ENCODE measurements at regions of chr19 and their contacts with region 1.

Region 1: DNA sequence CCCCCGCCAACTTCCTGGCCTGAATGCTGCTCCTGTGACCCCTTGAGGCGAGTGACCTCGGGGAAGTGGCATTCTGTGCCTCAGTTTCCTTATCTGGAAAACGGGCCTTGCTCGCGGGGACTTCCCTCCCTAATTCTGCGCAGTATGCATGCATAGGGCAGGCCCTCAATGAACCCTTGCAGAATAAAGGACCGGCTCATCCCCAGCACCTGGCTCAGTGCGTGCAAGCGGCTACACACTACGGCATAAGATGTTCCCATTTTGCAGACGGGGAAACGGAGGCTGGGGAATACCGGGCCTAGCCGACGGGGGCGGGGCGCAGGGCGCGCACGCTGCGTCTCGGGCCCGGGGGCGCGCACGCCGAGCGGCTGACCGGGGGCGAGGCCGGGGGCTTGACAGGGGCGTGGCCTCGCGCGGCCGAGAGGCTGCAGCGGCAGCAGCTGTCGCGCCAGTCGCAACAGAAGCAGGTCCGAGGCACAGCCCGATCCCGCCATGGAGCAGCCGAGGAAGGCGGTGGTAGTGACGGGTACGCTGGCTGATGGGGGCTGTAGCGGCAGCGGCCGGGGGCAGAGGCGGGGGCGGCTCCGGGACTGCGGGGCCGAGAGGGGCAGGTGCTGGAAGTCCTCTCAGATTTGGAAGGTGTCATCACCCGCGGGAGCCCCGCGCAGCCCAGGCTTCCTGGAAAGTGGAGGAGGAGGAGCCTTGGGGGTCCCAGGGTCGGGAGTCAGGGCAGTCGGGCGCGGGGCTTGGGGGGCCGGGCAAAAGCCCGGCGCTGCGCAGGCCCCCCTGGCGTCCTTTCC is at the start of gene PGPEP1:
- DNase-seq: peak; percentile 39 to 85 (median 65)
- H3K4me3 ChIP-seq: peak within 1 kb of the TSS; percentile 56 to 85 (median 84)
- H3K4me3 Mint-ChIP-seq: peak within 1 kb of the TSS; percentile 84 to 92
- H3K27ac ChIP-seq: peak within 1 kb of the TSS; percentile 81 to 89
- H3K27ac Mint-ChIP-seq: peak within 1 kb of the TSS; percentile 70 to 92 (median 88)
- H3K4me1 ChIP-seq: peaks cover 41 to 46% of the 10 kb centered on the region in 2 donors
- H3K4me1 Mint-ChIP-seq: peaks cover 49% of the 10 kb centered on the region
- H3K27me3 ChIP-seq: no peaks in the 10 kb centered on the region
- H3K27me3 Mint-ChIP-seq: peaks cover 0 to 8% (median 2%) of the 10 kb centered on the region in 3 donors
- CTCF ChIP-seq: no peak
- polyA plus RNA-seq, gene PGPEP1: 10.3 to 25.1 (median 10.3) TPM

Region 2: GRCh38 chr19:18379803-18380747 is 39.7 kb after region 1 on chr19:
- intact Hi-C with region 1: loop called (anchors 5 kb)
- DNase-seq: peak; percentile 73 to 84 (median 74)
- H3K4me3 ChIP-seq: peak overlapping the region in 1 of 3 experiments; percentile 4
- H3K4me3 Mint-ChIP-seq: peak overlapping the region in 1 of 2 donors; percentile 59
- H3K27ac ChIP-seq: peak overlapping the region; percentile 69 to 74
- H3K27ac Mint-ChIP-seq: peak overlapping the region; percentile 82 to 96 (median 90)
- H3K4me1 ChIP-seq: peaks cover 30 to 45% of the 10 kb centered on the region in 2 donors
- H3K4me1 Mint-ChIP-seq: peaks cover 46% of the 10 kb centered on the region
- H3K27me3 ChIP-seq: no peaks in the 10 kb centered on the region
- H3K27me3 Mint-ChIP-seq: peaks cover 0 to 13% (median 9%) of the 10 kb centered on the region in 3 donors
- CTCF ChIP-seq: no peak

Region 3: DNA sequence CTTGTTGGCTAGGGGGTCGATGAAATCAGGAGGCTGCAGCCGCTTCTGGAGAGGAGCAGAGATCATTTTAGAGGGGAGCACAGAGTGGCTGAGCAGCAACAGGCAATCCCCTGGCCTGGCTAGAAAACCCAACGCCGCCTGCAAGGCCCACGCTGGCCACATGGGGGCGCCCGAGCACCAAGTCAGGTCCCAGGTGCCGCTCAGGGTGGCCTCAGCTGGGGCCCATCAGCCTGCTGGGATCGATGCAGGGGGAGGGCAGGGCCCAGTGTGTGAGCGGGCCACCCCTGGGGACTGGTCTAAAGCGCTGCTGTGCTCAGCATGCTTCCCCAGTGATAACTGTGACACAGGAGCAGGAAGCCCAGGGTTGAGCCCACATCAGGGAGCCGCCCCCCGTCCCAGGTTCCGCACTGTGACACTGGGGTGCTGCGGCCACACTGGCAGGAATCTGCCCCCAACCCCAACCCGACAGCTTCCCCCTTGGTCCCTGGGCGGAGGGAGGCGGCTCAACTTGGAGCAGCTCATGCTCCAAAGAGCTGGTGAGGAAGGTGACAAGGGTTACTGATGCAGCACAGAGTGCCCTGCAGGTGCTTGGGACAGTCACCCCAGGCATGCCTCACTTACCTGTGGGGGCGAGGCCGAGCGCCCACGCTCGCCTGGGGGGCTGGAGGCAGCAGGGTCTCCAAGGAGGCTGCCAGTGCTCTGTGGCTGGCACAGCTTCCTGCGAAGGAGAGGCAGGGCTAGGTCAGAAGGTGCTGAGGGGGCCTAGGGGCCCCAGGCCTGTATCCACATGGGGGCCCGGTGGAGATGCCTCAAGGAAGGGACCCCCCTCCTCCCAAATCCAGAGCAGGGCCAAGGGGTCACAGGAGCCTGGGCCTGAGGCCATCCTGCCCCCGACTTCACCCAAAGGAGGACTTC is 110.8 kb after region 1 on chr19:
- intact Hi-C with region 1: no loop called
- DNase-seq: peak; percentile 63 to 74 (median 72)
- H3K4me3 ChIP-seq: no peak overlapping the region
- H3K4me3 Mint-ChIP-seq: no peak overlapping the region
- H3K27ac ChIP-seq: no peak overlapping the region
- H3K27ac Mint-ChIP-seq: peak overlapping the region in 1 of 7 donors; percentile 73
- H3K4me1 ChIP-seq: no peaks in the 10 kb centered on the region
- H3K4me1 Mint-ChIP-seq: no peaks in the 10 kb centered on the region
- H3K27me3 ChIP-seq: no peaks in the 10 kb centered on the region
- H3K27me3 Mint-ChIP-seq: peaks cover 0 to 6% (median 1%) of the 10 kb centered on the region in 3 donors
- CTCF ChIP-seq: peak; percentile 96

Measured in CD14-positive monocyte (primary cell).